ENCODE measurements at regions of chr6 and their contacts with region 1.

Region 1: DNA sequence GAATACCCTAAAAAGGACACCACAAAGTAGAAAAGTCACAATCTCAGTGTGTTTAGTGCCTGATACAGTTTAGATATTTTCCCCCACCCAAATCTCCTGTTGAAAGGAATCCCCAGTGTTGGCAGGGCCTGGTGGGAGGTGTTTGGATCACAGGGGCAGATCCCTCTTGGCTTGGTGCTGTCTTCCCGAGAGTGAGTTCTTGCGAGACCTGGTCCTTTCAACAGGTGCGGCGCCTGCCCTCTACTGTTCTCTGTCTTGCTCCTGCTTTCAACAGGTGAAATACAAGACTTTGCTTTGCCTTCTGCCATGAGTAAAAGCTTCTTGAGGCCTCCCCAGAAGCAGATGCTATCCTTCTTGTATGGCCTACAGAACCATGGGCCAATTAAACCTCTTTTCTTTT is 534.3 kb upstream of the NRSN1 start:
- DNase-seq: no peak

Region 2: GRCh38 chr6:23566418-23566817 is 25.3 kb before region 1 on chr6:
- intact Hi-C with region 1: loop called in 1 of 2 experiments (anchors 1 kb)
- DNase-seq: no peak

Region 3: DNA sequence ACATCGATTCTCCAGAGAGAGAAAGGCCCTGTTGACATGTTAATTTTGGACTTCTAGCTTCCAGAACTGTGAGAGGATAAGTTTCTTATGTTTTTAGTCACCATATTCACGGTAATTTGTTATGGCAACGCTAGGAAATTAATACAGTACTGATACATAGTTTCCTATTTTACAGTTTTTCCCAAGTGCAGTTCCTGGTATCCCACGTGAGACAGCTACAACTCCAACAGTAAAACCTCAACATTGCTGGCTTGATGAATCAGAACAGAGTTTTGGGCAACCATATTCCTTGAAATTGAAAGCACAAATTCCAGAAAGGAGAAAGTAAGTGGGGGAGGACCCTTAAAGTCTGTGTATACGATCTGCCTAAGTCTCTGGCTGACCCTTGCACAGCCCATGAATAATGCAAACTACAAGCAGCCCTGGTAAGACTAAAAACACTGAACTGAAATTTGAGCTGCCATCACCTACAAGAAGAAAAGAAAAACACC is 29.2 kb after region 1 on chr6:
- intact Hi-C with region 1: no loop called
- DNase-seq: no peak